Testis (tissue), 5 donors: ENCODE measurements at regions of chr7 and their contacts with region 1.

Region 1: DNA sequence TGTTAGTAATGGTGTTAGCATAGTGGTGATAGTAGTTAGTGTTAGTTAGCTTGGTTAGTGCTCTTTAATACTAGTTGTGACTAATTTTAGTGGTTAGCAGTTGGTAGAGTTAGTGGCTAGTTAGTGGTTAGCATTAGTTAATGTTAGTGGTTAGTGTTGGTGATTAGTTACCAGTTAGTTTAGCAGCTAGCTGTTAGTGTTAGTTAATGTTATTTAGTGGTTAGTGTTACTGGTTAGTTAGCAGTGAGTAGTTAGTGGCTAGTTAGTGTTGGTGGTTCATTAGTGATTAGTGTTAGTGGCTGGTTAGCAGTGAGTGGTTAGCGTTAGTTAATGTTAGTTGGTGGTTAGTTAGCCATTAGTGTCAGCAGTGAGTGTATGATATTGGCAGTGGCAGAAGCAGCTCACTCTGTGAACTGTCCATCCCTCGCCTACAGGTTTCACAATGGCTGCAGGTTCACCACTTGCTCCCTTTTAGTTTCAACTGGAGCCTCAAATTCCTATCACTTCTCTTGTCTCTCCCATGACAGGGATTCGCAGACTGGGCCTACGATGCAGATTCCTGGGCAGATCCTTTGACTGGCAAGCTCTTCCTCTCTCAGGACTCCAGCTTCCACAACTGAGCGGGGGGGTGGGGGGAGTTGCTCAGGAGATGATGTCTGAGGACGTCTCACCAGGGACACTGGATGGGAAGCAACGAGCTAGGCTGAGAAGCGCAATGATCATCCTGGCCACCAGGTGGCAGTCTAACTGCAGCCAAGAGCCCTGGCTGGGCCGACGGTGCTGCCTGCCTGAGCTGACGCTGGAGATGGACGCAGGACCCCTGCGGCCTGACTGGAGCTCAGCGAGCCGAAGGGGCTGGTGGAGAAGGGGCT is 19.5 kb downstream of the GHRHR start:
- DNase-seq: peak; percentile 94
- H3K4me3 ChIP-seq: peak overlapping the region; percentile 22 to 44
- H3K27ac ChIP-seq: no peak overlapping the region
- H3K4me1 ChIP-seq: no peaks in the 10 kb centered on the region
- H3K27me3 ChIP-seq: no peaks in the 10 kb centered on the region
- CTCF ChIP-seq: peak; percentile 90 to 97 (median 94)
- POLR2A ChIP-seq: no peak

Region 2: GRCh38 chr7:30869794-30870611 is 113.3 kb before region 1 on chr7:
- intact Hi-C with region 1: no loop called
- DNase-seq: no peak
- H3K4me3 ChIP-seq: no peak overlapping the region
- H3K27ac ChIP-seq: no peak overlapping the region
- H3K4me1 ChIP-seq: no peaks in the 10 kb centered on the region
- H3K27me3 ChIP-seq: no peaks in the 10 kb centered on the region
- CTCF ChIP-seq: no peak
- POLR2A ChIP-seq: no peak

Region 3: DNA sequence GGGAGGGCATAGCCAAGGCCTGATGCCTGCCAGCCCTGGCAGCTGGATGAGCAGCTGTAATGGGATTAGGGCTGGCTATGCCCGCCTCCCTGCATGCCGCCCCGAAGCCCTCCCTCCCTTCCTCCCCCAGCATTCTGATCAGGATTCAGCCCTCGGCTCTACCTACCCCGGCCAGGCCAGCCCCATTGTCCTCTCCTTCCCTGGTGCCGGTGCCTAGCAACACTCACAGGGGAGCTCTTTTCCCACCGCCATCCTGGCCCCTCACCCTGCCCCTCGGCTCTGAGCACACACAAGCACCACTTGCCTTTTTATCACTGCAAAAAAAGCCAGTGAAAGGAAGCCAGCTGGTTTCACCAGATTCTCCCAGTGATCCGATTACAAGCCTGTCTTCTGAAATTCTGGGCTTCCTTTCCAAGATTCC is 59.8 kb after region 1 on chr7:
- intact Hi-C with region 1: no loop called
- DNase-seq: no peak
- H3K4me3 ChIP-seq: no peak overlapping the region
- H3K27ac ChIP-seq: no peak overlapping the region
- H3K4me1 ChIP-seq: no peaks in the 10 kb centered on the region
- H3K27me3 ChIP-seq: no peaks in the 10 kb centered on the region
- CTCF ChIP-seq: no peak
- POLR2A ChIP-seq: no peak

Region 4: DNA sequence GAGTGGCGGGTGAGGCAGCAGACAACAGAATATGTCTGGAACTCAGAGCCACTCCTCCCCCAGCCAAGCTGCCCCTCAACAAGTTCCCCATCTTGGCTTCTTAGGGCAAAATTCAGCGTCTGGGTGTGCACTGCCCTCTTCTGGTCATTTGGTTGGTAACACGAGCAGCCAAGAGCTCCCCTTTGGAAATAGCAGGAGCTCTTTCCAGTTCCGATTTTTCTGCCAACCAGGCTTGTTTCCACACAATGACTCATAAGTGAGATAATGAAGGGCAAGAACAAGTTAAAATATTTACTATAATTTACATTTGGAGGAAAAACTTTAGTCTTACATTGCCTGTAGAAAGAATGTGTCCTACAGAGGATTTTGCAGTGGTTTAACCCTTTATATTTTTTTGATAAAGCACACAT is 139.4 kb after region 1 on chr7:
- intact Hi-C with region 1: loop called (anchors 5 kb)
- DNase-seq: peak; percentile 84
- H3K4me3 ChIP-seq: no peak overlapping the region
- H3K27ac ChIP-seq: no peak overlapping the region
- H3K4me1 ChIP-seq: no peaks in the 10 kb centered on the region
- H3K27me3 ChIP-seq: no peaks in the 10 kb centered on the region
- CTCF ChIP-seq: peak; percentile 58 to 77 (median 77)
- POLR2A ChIP-seq: no peak